ENCODE measurements at regions of chr5 and their contacts with region 1.

Region 1: GRCh38 chr5:150544611-150545219 is 36.8 kb downstream of the NDST1 start:
- DNase-seq: no peak
- H3K4me3 ChIP-seq: no peak overlapping the region
- H3K27ac ChIP-seq: no peak overlapping the region
- H3K4me1 ChIP-seq: peaks cover 15 to 33% (median 26%) of the 10 kb centered on the region in 4 donors
- H3K27me3 ChIP-seq: no peaks in the 10 kb centered on the region
- CTCF ChIP-seq: peak; percentile 76 to 88 (median 85)
- EP300 ChIP-seq: no peak
- POLR2A ChIP-seq: no peak

Region 2: DNA sequence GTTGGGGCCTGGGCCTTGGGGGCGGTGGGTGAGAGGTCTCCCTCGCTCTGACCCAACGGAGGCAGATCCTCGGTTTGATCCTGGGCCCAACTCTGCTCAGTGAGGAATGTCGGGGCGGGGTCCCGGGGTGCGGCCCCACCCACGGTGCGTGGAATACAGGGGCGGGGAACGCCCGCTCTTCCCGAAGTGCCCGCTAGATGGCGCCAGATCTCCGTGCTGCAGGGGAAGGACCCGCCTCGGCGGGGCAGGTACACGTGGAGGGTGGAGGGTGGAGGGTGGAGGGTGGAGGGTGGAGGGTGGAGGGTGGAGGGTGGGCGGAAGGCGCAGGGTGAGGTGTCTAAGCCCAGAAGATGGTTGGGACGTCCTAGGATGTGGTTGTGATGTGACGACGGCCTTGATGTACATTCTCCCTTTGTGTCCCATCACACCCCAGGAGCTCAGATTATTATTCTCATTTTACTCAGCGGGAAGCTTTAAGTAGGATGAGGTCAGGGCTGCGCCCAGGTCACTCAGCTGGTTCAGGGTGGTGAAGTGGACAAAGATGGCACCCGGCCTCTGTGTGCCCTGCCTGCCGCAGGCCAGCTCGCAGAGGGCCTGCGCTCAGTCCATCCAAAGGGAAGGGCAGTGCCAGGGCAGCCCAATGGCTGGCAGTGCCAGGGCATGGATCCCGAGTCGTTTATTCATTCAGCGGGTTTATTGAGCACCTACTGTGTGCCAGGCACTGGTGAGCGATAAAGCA is 85.7 kb before region 1 on chr5:
- intact Hi-C with region 1: loop called (anchors 2 kb)
- DNase-seq: peak; percentile 94
- H3K4me3 ChIP-seq: peak overlapping the region; percentile 26 to 44 (median 35)
- H3K27ac ChIP-seq: peak overlapping the region in 1 of 4 donors; percentile 10
- H3K4me1 ChIP-seq: peaks cover 9 to 21% (median 17%) of the 10 kb centered on the region in 4 donors
- H3K27me3 ChIP-seq: no peaks in the 10 kb centered on the region
- CTCF ChIP-seq: peak; percentile 77 to 93 (median 88)
- EP300 ChIP-seq: no peak
- POLR2A ChIP-seq: no peak

Measured in esophagus muscularis mucosa (tissue), 4 donors.